ENCODE measurements at regions of chr3 and their contacts with region 1.

Region 1: GRCh38 chr3:142993958-142994442 is 7.4 kb upstream of the U2SURP start:
- DNase-seq: peak; percentile 59
- ATAC-seq: peak; percentile 78
- H3K4me3 ChIP-seq: no peak overlapping the region
- H3K27ac ChIP-seq: no peak overlapping the region
- H3K4me1 ChIP-seq: peaks cover 9 to 20% of the 10 kb centered on the region in 2 experiments; a peak in 3 of 4 replicates
- H3K27me3 ChIP-seq: no peaks in the 10 kb centered on the region
- CTCF ChIP-seq: peak; percentile 57 to 84 (median 83)
- POLR2A ChIP-seq: no peak
- RAD21 ChIP-seq: peak; percentile 89

Region 2: DNA sequence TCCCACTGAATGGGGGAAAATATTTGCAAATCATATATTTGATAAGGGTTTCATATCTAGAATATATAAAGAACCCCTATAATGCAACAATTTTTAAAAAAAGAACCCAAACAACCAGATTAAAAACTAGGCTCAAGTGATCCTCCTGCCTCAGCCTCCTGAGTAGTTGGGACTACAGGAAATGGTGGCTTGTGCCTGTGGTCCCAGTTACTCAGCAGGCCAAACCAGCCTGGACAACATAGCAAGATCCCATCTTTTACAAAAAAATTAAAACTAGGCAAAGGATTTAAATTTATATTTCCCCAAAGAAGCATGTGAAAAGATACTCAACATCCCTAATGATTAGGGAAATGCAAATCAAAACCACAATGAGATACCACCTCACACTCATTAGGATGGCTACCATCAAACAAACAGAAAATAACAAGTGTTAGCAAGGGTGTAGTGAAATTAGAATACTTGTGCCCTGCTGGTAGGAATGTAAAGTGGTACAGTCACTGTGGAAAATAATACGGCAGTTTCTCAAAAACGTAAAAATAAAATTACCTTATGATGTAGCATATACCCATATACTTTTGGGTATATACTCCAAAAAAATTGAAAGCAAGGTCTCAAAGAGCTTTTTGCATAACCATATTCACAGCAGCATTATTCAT is 864.4 kb before region 1 on chr3:
- CTCF ChIA-PET with region 1: no interaction called
- POLR2A ChIA-PET with region 1: no interaction called
- RAD21 ChIA-PET with region 1: no interaction called
- intact Hi-C with region 1: loop called (anchors 1 kb)
- DNase-seq: no peak
- ATAC-seq: no peak
- H3K4me3 ChIP-seq: no peak overlapping the region
- H3K27ac ChIP-seq: no peak overlapping the region
- H3K4me1 ChIP-seq: no peaks in the 10 kb centered on the region
- H3K27me3 ChIP-seq: no peaks in the 10 kb centered on the region
- CTCF ChIP-seq: peak in 2 of 3 experiments; percentile 23 to 54; a peak in 3 of 6 replicates
- POLR2A ChIP-seq: no peak
- RAD21 ChIP-seq: no peak

Region 3: DNA sequence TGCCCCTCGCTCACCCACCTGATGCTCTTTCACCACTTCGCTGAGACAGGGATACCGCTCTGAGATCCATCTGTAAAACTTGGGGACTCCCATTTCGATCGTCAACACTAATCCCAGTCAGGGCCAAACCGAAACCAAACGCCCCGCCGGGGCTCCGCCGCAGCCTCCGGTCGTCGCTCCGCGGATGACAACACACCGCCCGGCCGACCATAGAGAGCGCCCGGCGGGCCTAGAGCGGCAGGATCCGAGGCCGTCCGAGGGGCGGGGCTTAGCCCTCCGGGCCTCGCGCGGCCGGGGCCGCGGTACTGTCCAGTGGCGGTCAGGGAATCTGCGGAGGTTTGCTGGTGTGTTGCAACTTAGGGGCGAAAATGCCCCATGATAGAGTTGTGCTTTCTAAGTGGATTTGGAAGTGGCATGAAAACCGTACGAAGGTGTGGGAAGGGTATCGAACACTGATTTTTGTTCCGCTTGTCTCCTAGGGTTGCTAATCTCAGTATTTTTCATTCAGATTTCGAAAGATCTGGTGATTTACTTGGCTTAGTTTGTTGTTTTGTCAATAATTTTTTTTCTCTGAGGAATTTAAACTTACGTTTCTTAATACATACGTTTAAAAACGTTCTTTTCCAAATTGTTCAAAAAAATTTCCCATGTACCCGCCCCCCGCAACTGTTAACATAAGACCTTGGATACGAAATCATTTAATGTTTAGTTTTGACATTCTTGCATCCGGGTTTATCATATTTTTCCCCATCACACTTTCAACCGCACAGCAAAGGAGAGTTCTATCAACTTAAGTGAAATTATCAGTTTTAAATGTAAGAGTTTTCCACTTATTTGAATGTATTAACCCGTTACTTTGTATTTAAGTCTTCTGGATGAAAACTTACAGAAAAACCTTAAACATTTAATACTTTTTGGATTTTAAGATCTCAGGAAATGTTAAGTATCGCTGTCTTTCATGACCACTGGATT is 545.9 kb before region 1 on chr3 and contains the start of gene XRN1:
- CTCF ChIA-PET with region 1: no interaction called
- POLR2A ChIA-PET with region 1: no interaction called
- RAD21 ChIA-PET with region 1: no interaction called
- intact Hi-C with region 1: loop called (anchors 10 kb)
- DNase-seq: peak; percentile 82
- ATAC-seq: peak; percentile 100
- H3K4me3 ChIP-seq: peak within 1 kb of the TSS; percentile 95 to 96
- H3K27ac ChIP-seq: peak within 1 kb of the TSS; percentile 52
- H3K4me1 ChIP-seq: peaks cover 9 to 18% of the 10 kb centered on the region in 2 experiments; a peak in 3 of 4 replicates
- H3K27me3 ChIP-seq: no peaks in the 10 kb centered on the region
- CTCF ChIP-seq: no peak
- POLR2A ChIP-seq: peak; percentile 65
- RAD21 ChIP-seq: no peak
- total RNA-seq, gene XRN1: 21.3 TPM